Gastrocnemius medialis (tissue), 4 donors: ENCODE measurements at regions of chr3 and their contacts with region 1.

Region 1: DNA sequence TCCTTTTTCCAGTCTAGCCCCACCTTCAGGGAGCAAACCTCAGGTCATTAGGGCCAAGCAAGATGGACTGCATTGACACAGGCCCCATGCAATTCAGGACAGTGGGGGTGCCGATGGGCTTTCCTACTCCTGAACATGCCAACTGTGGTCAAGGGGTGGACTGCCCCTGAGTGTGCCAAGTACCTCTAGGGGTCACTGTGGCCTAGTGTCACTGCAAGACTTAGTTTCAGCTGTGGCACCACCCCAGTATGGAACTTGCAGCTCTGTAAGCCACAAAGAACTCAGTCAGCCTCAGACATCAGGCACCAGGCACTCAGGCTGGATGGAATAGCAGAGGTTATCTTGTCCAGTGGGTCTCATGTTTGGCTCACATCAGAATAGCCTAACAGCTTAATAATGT is 32.3 kb downstream of the EXOG start:
- DNase-seq: no peak
- ATAC-seq: no peak
- H3K4me3 ChIP-seq: no peak overlapping the region
- H3K27ac ChIP-seq: no peak overlapping the region
- H3K4me1 ChIP-seq: no peaks in the 10 kb centered on the region
- H3K27me3 ChIP-seq: no peaks in the 10 kb centered on the region
- CTCF ChIP-seq: no peak
- POLR2A ChIP-seq: no peak

Region 2: DNA sequence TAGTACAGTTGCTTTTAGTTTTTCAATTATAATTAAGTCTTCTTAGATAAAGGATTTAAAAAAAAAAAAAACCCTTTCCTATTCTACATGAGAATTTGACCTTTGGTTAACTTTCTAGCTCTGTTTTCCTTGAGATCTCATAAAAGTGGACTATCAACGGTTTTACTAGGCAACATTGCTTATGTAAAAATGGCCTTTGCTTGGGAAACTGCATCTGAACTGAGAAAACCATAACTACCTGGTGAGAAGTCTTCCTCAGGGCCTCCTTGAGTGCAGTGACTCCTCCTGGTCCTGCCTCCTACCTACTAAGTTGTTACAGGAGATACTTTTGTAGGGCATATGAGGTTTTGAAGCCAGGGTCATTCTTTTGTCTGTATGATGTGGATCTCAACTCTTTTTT is 116.9 kb before region 1 on chr3:
- in situ Hi-C with region 1: no loop called
- intact Hi-C with region 1: no loop called
- DNase-seq: no peak
- ATAC-seq: no peak
- H3K4me3 ChIP-seq: no peak overlapping the region
- H3K27ac ChIP-seq: no peak overlapping the region
- H3K4me1 ChIP-seq: no peaks in the 10 kb centered on the region
- H3K27me3 ChIP-seq: no peaks in the 10 kb centered on the region
- CTCF ChIP-seq: no peak
- POLR2A ChIP-seq: no peak

Region 3: GRCh38 chr3:39000008-39000450 is 471.6 kb after region 1 on chr3:
- in situ Hi-C with region 1: loop called in 2 of 4 experiments (anchors 25 kb)
- intact Hi-C with region 1: no loop called
- DNase-seq: no peak
- ATAC-seq: no peak
- H3K4me3 ChIP-seq: no peak overlapping the region
- H3K27ac ChIP-seq: no peak overlapping the region
- H3K4me1 ChIP-seq: no peaks in the 10 kb centered on the region
- H3K27me3 ChIP-seq: no peaks in the 10 kb centered on the region
- CTCF ChIP-seq: peak in 3 of 5 experiments; percentile 18 to 43 (median 34)
- POLR2A ChIP-seq: no peak